GM10248 (cell line): ENCODE measurements at regions of chr3 and their contacts with region 1.

Region 1: GRCh38 chr3:123652346-123652984 is 67.6 kb upstream of the HACD2 start:
- DNase-seq: peak; percentile 77
- CTCF ChIP-seq: peak; percentile 89

Region 2: GRCh38 chr3:123365450-123366143 is 286.9 kb before region 1 on chr3:
- CTCF ChIA-PET with region 1: no interaction called
- POLR2A ChIA-PET with region 1: no interaction called
- DNase-seq: no peak
- CTCF ChIP-seq: no peak

Region 3: DNA sequence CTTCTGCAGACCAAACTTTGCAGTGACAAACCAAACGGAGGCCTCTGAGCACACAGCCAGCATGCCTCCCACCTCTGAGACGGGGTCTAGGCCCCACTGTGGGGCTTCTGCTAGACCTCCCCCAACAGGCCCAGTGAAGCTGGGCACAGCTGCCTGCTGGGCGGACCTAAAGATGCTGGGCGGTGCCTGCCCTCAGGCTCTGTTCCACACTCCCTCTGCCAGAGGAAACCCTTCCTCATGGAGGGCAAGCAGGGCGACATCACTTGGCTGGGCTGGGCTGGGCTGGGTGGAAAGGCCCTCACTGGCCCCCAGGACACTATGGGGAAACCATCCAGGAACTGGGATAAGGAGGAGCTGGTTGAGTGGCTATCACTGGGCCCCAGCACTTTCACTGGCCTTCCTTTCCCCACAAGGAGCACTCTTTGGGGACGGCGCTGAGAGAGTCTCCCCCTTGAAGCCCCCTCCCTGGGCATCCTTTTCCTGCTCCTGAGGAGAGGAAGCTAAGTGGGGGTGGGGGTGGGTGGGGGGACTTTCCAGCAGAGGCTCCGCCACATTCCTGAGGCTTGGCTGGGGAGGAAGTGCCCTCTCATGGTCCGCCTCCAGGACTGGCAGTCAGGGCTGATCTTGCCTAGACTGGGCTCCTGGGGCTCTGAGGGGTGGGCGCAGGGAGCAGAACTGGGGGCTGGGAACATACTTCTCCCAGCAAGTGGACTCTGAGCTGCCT is 30.5 kb after region 1 on chr3:
- CTCF ChIA-PET with region 1: interaction called, 15 read pairs
- POLR2A ChIA-PET with region 1: no interaction called
- DNase-seq: no peak
- CTCF ChIP-seq: no peak

Region 4: DNA sequence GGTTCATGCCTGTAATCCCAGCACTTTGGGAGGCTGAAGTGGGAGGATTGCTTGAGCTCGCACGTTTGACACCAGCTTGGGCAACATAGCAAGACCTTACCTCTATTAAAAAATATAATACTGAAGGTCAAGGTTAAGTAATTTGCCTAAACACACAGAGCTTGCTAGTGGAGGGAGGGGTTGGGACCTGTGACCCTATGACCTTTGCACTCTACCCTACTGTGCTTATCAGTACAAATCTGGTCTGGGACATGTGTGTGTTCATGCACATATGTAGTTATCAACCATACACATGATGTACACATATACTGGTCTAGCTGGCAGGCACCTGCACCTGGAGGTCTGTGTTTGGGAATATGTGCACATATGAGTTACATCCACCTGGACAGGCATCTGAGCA is 50.3 kb after region 1 on chr3:
- CTCF ChIA-PET with region 1: interaction called, 12 read pairs
- POLR2A ChIA-PET with region 1: no interaction called
- DNase-seq: no peak
- CTCF ChIP-seq: no peak